ENCODE measurements at regions of chr19 and their contacts with region 1.

Region 1: GRCh38 chr19:27974082-27974513 is 1238.9 kb downstream of the UQCRFS1 start:
- DNase-seq: no peak
- H3K4me3 ChIP-seq: no peak overlapping the region
- H3K27ac ChIP-seq: no peak overlapping the region
- H3K4me1 ChIP-seq: no peaks in the 10 kb centered on the region
- H3K27me3 ChIP-seq: no peaks in the 10 kb centered on the region
- CTCF ChIP-seq: peak; percentile 49 to 65

Region 2: DNA sequence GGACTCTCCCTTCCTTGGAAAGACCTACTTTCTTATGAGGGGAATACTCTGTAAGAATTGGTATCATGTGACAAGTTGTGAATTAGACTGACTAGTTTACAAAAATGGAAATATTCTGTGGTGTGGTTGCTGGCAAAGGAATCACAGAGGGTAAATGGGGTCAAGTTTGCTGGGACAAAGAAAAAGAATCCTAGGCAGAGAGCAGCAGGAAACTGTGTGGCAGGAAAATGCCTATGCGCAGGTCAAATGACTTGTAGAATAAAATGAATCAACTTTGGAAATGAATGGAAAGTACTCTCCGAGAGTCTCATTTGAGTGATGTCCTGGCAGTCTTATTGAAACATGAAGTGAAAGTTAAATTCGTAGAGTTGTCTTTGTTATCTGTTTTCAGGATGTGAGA is 11.8 kb before region 1 on chr19:
- CTCF ChIA-PET with region 1: no interaction called
- dilution Hi-C with region 1: no loop called
- in situ Hi-C with region 1: no loop called
- intact Hi-C with region 1: no loop called
- DNase-seq: no peak
- H3K4me3 ChIP-seq: no peak overlapping the region
- H3K27ac ChIP-seq: no peak overlapping the region
- H3K4me1 ChIP-seq: no peaks in the 10 kb centered on the region
- H3K27me3 ChIP-seq: no peaks in the 10 kb centered on the region
- CTCF ChIP-seq: no peak

Region 3: DNA sequence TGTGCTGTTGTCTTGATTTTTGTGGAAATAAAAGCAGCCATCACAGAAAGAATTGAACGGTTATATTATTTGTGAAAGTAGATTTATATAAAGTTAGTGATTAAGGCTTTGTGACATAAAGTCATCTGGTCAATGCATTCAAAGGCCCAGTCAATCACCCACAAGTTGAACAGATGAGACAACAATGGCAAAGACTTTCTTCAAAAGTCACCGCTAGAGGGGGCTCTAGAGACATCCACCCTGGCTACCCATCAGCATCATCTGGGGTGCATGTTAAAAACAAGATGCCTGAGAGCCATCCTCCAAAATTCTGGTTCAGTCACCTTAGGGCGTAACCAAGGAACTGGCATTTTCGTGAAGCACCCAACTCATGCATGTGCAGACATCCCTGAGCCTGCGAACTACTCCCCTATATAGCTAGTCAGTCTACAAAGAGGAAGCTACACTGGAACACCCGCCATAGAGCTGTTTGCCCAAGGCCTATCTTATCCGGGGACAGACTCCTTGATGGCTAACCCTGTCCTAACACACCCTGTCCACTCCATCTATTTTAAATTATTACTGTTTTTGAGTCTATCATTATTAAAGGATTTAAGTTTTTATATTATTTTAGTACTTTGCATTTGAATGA is 268.3 kb after region 1 on chr19:
- CTCF ChIA-PET with region 1: no interaction called
- dilution Hi-C with region 1: no loop called
- in situ Hi-C with region 1: no loop called
- intact Hi-C with region 1: loop called (anchors 2 kb)
- DNase-seq: peak; percentile 2
- H3K4me3 ChIP-seq: no peak overlapping the region
- H3K27ac ChIP-seq: no peak overlapping the region
- H3K4me1 ChIP-seq: no peaks in the 10 kb centered on the region
- H3K27me3 ChIP-seq: no peaks in the 10 kb centered on the region
- CTCF ChIP-seq: peak; percentile 62 to 78

Region 4: DNA sequence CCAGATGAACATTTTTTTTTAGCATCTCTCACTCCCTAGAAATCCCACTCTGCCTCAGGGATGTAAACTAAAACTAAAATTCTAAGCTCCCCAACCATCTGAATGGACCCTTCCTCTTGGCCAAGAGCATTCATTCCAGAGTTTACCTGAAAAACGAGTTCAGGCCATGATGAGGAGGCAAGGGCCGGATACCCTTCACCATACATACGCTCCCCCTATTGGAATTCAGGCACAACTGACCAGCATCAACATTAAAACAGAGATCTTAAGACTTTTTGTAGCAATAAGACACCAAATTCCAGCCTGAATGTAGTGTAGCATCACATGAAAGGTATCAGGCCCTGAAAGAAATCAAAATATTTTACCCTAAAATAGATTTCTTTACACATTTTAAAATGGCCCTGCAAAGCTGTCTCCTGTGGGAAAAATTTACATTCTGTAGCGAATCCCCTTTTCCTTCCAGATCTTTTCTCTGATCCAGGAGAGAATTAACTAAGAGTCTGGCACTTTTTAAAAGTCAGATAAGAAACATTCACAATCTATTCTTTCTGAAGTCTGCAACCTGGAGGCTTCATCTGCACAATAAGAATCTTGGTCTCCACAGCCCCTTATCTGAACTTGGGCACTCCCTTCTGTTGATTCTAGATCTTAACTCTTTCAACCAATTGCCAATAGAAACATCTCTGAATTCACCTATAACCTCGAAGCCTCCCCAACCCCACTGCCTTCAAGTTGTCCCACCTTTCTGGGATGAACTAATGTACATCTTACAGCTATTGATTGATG is 350.4 kb after region 1 on chr19:
- CTCF ChIA-PET with region 1: interaction called, 4 read pairs
- dilution Hi-C with region 1: no loop called
- in situ Hi-C with region 1: loop called in 1 of 2 experiments (anchors 10 kb)
- intact Hi-C with region 1: loop called (anchors 1 kb)
- DNase-seq: no peak
- H3K4me3 ChIP-seq: no peak overlapping the region
- H3K27ac ChIP-seq: no peak overlapping the region
- H3K4me1 ChIP-seq: no peaks in the 10 kb centered on the region
- H3K27me3 ChIP-seq: no peaks in the 10 kb centered on the region
- CTCF ChIP-seq: peak in 1 of 2 donors; percentile 4

Region 5: DNA sequence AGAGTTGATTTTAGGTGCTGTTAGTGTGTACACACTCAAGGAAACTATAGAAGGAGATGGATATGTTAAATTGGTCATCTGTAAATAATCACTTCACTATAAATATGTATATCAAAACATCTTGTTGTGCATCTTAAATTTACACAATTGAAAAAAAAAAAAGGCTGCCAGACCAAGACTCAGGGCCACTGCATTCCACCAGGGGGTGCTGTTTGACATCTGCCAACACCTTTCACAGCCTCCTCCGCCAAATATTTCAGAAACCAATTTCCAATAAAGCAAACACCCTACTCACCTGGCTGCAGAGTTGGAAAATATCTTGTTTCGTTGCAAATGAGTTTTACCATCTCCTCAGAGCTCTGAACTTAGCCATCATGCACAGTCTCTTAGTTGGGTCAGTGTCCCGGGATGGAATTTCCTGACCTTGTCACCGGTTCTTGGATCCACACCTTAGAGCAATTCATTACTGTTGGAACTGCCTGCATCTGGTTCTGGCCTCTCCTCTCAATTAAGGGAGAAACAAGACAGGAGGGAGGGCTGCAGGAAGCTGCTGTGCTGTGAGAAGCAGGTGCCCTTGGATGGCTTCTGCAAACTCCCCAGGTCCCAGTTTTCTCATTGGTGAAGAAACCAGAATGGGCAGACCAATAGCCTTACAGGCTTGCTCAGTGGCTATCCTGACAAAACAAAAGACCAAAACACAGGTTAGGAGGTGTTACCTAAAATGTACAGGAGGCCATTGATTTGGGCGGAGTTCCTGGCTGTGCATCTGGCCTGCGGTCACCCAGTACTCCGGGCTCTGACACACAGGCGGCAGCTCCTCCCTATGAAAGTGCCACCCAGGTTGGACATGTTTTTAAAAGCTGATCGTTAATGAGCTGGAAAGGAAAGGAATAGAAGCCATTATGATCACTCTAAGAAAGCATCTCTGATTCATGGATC is 492.3 kb after region 1 on chr19:
- CTCF ChIA-PET with region 1: no interaction called
- dilution Hi-C with region 1: no loop called
- in situ Hi-C with region 1: no loop called
- intact Hi-C with region 1: loop called (anchors 10 kb)
- DNase-seq: peak; percentile 35
- H3K4me3 ChIP-seq: no peak overlapping the region
- H3K27ac ChIP-seq: no peak overlapping the region
- H3K4me1 ChIP-seq: peaks cover 29% of the 10 kb centered on the region
- H3K27me3 ChIP-seq: no peaks in the 10 kb centered on the region
- CTCF ChIP-seq: peak; percentile 86 to 89

Region 6: DNA sequence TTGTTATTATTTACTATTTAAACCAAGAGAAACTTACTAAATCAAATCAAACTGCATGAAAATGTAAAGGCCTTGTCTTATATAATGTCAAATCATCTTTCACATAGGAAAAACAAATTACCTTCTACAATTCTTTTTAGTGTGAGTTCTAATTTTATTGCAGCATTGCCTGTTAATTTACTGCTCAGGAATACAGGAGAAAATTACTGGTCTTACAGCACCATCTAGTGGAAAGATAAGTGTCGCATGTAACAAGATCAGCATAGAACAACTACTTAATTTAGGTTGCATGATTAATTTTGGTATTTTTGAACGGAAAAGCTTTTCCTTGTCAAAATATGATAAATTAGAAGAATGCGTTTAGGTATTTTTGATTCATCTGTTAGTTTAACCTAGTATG is 736.2 kb after region 1 on chr19:
- CTCF ChIA-PET with region 1: interaction called, 4 read pairs
- dilution Hi-C with region 1: no loop called
- in situ Hi-C with region 1: loop called in 1 of 2 experiments (anchors 25 kb)
- intact Hi-C with region 1: loop called (anchors 5 kb)
- DNase-seq: peak; percentile 52
- H3K4me3 ChIP-seq: no peak overlapping the region
- H3K27ac ChIP-seq: no peak overlapping the region
- H3K4me1 ChIP-seq: peaks cover 7% of the 10 kb centered on the region
- H3K27me3 ChIP-seq: no peaks in the 10 kb centered on the region
- CTCF ChIP-seq: peak; percentile 64 to 73

Region 7: DNA sequence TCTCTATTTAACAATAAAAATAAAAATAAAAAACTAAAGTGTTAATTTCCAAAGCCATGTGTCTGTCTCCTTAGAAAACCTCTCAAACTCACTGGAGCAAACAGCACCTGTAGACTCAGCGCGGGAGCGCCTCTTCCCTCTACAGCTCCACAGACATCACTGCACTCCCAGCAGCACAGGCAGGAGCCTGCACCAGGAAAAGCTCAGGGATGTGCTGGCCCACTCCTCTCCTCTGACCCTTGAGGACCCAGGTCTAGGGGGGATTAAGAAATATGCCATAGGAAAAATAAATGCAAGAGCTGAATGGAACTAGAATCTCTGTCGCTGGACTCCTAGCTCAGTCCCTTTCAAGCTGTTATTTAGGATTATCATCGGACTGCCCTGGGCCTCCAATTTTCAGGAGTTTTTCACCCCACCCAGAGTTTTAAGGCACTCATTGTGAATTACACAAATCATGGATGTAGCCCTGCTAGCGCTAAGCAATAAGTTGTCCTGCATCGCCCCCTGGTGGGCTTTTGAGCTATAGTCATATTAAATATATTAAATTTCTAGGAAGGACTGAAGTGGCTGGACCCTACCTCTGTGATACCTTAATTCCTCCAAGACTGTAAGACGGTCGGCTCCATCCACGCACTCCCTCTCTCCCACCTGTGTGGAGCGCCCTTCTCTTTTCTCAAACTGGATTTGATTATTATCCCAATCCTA is 904.9 kb after region 1 on chr19:
- CTCF ChIA-PET with region 1: no interaction called
- dilution Hi-C with region 1: no loop called
- in situ Hi-C with region 1: no loop called
- intact Hi-C with region 1: loop called (anchors 5 kb)
- DNase-seq: peak; percentile 21
- H3K4me3 ChIP-seq: no peak overlapping the region
- H3K27ac ChIP-seq: no peak overlapping the region
- H3K4me1 ChIP-seq: no peaks in the 10 kb centered on the region
- H3K27me3 ChIP-seq: no peaks in the 10 kb centered on the region
- CTCF ChIP-seq: peak; percentile 35 to 60

Measured in mammary epithelial cell (primary cell).